ENCODE measurements at regions of chr3 and their contacts with region 1.

Region 1: GRCh38 chr3:186617038-186617946 is 4.4 kb downstream of the AHSG start:
- DNase-seq: peak; percentile 67 to 87 (median 83)
- ATAC-seq: peak; percentile 99
- H3K4me3 ChIP-seq: peak overlapping the region; percentile 23
- H3K4me3 Mint-ChIP-seq: peak overlapping the region; percentile 47 to 81 (median 74)
- H3K27ac ChIP-seq: no peak overlapping the region
- H3K27ac Mint-ChIP-seq: peak overlapping the region in 8 of 9 donors; percentile 51 to 81 (median 62)
- H3K4me1 ChIP-seq: peaks cover 5 to 10% of the 10 kb centered on the region in 2 donors
- H3K4me1 Mint-ChIP-seq: peaks cover 14 to 30% (median 21%) of the 10 kb centered on the region in 7 donors
- H3K27me3 ChIP-seq: no peaks in the 10 kb centered on the region
- H3K27me3 Mint-ChIP-seq: peaks cover 14 to 51% (median 26%) of the 10 kb centered on the region in 5 donors

Region 2: DNA sequence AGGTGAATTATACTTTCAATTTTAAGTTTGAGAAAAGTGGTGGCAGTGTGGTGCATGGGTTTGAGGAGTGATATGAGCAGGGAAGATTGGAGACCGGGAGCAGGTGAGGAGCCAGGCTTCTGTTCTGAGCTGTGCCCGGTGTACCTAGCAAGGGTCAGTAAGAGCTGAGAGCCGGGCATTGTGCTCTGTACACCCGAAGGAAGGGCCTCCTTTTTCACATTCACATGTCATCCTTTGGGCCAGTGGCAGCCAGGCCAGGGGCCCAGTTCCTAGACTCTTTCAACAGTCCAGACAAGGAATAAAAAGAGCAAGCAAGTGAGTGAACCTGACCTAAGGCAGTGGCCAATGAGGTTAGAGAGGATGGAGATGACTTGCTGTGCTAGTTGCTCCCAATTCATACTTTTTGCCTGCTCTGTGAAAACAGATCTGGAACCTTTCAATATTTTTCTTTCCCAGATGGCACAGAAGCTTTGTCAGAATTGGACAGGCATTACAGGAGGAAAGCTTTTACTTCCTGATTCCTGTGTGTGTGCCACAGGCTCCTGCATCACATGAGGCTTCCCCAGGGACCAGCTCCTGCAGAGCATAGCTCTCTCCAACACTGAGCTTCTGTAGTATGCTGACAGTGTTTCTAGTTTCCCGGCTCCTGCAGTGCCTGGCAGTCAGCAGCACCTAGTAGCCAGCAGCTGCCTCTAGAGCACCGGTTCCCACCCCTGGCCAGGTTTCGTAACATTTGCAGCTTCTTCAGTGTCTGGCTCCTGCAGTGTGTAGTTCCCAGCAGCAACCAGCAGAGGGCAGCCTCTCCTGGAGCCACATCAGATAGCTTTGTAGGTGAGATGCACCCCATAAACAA is 674.2 kb before region 1 on chr3:
- CTCF ChIA-PET with region 1: interaction called, 12 read pairs
- POLR2A ChIA-PET with region 1: interaction called, 4 read pairs
- intact Hi-C with region 1: no loop called
- DNase-seq: peak; percentile 72 to 88 (median 82)
- ATAC-seq: peak; percentile 100
- H3K4me3 ChIP-seq: peak overlapping the region; percentile 26
- H3K4me3 Mint-ChIP-seq: peak overlapping the region; percentile 9 to 76 (median 61)
- H3K27ac ChIP-seq: no peak overlapping the region
- H3K27ac Mint-ChIP-seq: peak overlapping the region in 6 of 9 donors; percentile 55 to 87 (median 68)
- H3K4me1 ChIP-seq: peaks cover 7 to 10% of the 10 kb centered on the region in 2 donors
- H3K4me1 Mint-ChIP-seq: peaks cover 11 to 26% (median 19%) of the 10 kb centered on the region in 7 donors
- H3K27me3 ChIP-seq: no peaks in the 10 kb centered on the region
- H3K27me3 Mint-ChIP-seq: peaks cover 0 to 24% (median 8%) of the 10 kb centered on the region in 5 donors

Region 3: GRCh38 chr3:186108941-186109865 is 508.1 kb before region 1 on chr3 and contains the start of gene ETV5:
- CTCF ChIA-PET with region 1: no interaction called
- POLR2A ChIA-PET with region 1: no interaction called
- intact Hi-C with region 1: loop called in 1 of 2 experiments (anchors 5 kb)
- DNase-seq: peak; percentile 65 to 91 (median 79)
- ATAC-seq: peak; percentile 97
- H3K4me3 ChIP-seq: peak within 1 kb of the TSS; percentile 71
- H3K4me3 Mint-ChIP-seq: peak within 1 kb of the TSS; percentile 86 to 97 (median 90)
- H3K27ac ChIP-seq: no peak within 1 kb of the TSS
- H3K27ac Mint-ChIP-seq: peak within 1 kb of the TSS in 5 of 9 donors; percentile 7 to 90 (median 60)
- H3K4me1 ChIP-seq: peaks cover 23 to 35% of the 10 kb centered on the region in 2 donors
- H3K4me1 Mint-ChIP-seq: peaks cover 34 to 38% (median 38%) of the 10 kb centered on the region in 7 donors
- H3K27me3 ChIP-seq: peaks cover 22 to 54% of the 10 kb centered on the region in 2 donors
- H3K27me3 Mint-ChIP-seq: peaks cover 84 to 87% (median 86%) of the 10 kb centered on the region in 5 donors
- total RNA-seq, gene ETV5: 0.56 to 2.3 (median 0.97) TPM in 4 of 5 experiments, not detected in the other

Region 4: GRCh38 chr3:186570096-186570940 is 47.0 kb before region 1 on chr3 and contains the start of gene DNAJB11:
- CTCF ChIA-PET with region 1: interaction called, 4 read pairs
- POLR2A ChIA-PET with region 1: interaction called, 9 read pairs
- intact Hi-C with region 1: loop called (anchors 1 to 2 kb)
- DNase-seq: peak; percentile 83 to 100 (median 99)
- ATAC-seq: peak; percentile 91
- H3K4me3 ChIP-seq: peak within 1 kb of the TSS; percentile 85
- H3K4me3 Mint-ChIP-seq: peak within 1 kb of the TSS; percentile 83 to 98 (median 95)
- H3K27ac ChIP-seq: peak within 1 kb of the TSS; percentile 95
- H3K27ac Mint-ChIP-seq: peak within 1 kb of the TSS; percentile 85 to 99 (median 98)
- H3K4me1 ChIP-seq: peaks cover 25 to 33% of the 10 kb centered on the region in 2 donors
- H3K4me1 Mint-ChIP-seq: peaks cover 20 to 70% (median 66%) of the 10 kb centered on the region in 7 donors
- H3K27me3 ChIP-seq: no peaks in the 10 kb centered on the region
- H3K27me3 Mint-ChIP-seq: peaks cover 0 to 4% (median 0%) of the 10 kb centered on the region in 5 donors
- total RNA-seq, gene DNAJB11: 29.9 to 75.2 (median 63.1) TPM

Region 5: DNA sequence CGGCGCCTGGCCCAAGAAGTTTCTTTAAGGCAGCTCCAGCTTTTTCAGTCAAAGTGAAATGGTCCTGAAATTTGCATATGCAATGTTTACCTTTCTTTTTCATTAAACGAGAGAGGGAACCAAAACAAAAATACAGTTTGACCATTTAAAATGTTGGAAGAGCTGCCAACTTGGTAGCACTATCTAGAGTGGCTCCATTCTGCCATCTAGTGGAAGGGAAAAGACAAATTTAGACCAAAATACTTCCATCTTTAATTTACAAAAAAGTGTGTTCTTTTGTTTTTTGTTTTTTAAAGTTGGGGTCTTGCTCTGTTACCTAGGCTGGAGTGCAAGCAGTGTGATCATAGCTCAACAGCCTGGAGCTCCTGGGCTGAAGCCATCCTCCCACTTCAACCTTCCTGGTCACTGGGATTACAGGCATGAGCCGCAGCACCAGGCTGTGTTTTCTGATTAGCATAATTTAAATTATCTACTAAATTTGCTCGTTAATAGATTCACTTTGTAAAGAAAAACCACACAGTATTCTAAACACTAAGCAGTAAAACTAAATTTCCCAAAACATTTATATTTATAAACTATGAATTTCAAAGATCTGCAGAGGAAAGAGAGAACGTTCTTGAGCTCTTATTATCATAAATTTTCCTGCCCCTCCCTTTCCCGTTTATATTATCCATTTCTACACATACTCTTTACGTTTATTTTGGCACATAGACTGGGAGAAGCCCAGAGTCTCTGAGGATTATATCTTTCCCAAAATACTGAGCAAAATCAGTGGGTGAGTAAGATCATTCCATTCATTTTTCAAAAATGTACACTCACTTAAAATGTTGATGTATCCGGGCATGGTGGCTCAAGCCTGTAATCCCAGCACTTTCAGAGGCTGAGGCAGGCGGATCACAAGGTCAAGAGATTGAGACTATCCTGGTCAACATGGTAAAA is 204.4 kb after region 1 on chr3:
- CTCF ChIA-PET with region 1: interaction called, 82 read pairs
- POLR2A ChIA-PET with region 1: interaction called, 6 read pairs
- intact Hi-C with region 1: loop called in 1 of 2 experiments (anchors 1 kb)
- DNase-seq: peak in 5 of 9 donors; percentile 37 to 49 (median 45)
- ATAC-seq: peak; percentile 46
- H3K4me3 ChIP-seq: no peak overlapping the region
- H3K4me3 Mint-ChIP-seq: no peak overlapping the region
- H3K27ac ChIP-seq: no peak overlapping the region
- H3K27ac Mint-ChIP-seq: no peak overlapping the region
- H3K4me1 ChIP-seq: peaks cover 6 to 11% of the 10 kb centered on the region in 2 donors
- H3K4me1 Mint-ChIP-seq: peaks cover 9 to 20% (median 12%) of the 10 kb centered on the region in 7 donors
- H3K27me3 ChIP-seq: peaks cover 0 to 14% of the 10 kb centered on the region in 2 donors
- H3K27me3 Mint-ChIP-seq: peaks cover 13 to 23% (median 18%) of the 10 kb centered on the region in 5 donors

Measured in naive thymus-derived CD4-positive, alpha-beta T cell (primary cell).